Activated CD8-positive, alpha-beta T cell treated with anti-CD3 and anti-CD28 coated beads, Interleukin-2, amount 10 ng/mL, durations not matched to agents 7 days and 5 days (primary cell): ENCODE measurements at regions of chr9 and their contacts with region 1.

Region 1: GRCh38 chr9:89505911-89506310 is 8.0 kb upstream of the SEMA4D start:
- DNase-seq: no peak
- ATAC-seq: no peak
- H3K4me3 Mint-ChIP-seq: no peak overlapping the region
- H3K27ac Mint-ChIP-seq: no peak overlapping the region
- H3K4me1 Mint-ChIP-seq: peaks cover 93% of the 10 kb centered on the region
- H3K27me3 Mint-ChIP-seq: no peaks in the 10 kb centered on the region

Region 2: GRCh38 chr9:89529243-89530035 is 23.5 kb after region 1 on chr9:
- CTCF ChIA-PET with region 1: interaction called, 36 read pairs
- POLR2A ChIA-PET with region 1: interaction called, 15 read pairs
- DNase-seq: peak; percentile 56
- ATAC-seq: peak; percentile 71
- H3K4me3 Mint-ChIP-seq: peak overlapping the region; percentile 26
- H3K27ac Mint-ChIP-seq: peak overlapping the region; percentile 85
- H3K4me1 Mint-ChIP-seq: peaks cover 96% of the 10 kb centered on the region
- H3K27me3 Mint-ChIP-seq: no peaks in the 10 kb centered on the region

Region 3: DNA sequence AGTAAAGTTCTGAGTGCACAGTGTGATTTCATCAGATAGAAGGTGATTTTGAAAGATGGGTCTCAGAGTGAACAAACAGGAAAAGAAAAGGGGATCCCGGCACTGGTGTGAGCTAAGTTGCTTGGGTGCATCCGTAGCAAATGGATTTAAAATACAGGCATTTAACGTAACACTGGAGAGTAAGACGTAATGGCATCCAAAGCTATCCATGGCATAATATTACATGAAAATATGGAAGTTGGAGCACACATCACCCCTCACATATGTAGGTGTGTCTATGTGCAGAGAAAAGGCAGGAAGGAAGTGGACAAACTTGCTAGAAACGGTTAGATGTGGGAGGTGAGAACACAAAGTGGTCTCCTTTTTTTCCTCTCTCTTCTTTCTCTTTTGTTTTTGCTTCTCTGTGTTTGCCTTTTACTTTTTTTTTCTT is 30.2 kb after region 1 on chr9:
- CTCF ChIA-PET with region 1: interaction called, 36 read pairs
- POLR2A ChIA-PET with region 1: interaction called, 15 read pairs
- DNase-seq: peak; percentile 64
- ATAC-seq: peak; percentile 78
- H3K4me3 Mint-ChIP-seq: peak overlapping the region; percentile 64
- H3K27ac Mint-ChIP-seq: peak overlapping the region; percentile 89
- H3K4me1 Mint-ChIP-seq: peaks cover 90% of the 10 kb centered on the region
- H3K27me3 Mint-ChIP-seq: no peaks in the 10 kb centered on the region

Region 4: GRCh38 chr9:89993678-89994630 is 488.0 kb after region 1 on chr9:
- CTCF ChIA-PET with region 1: no interaction called
- POLR2A ChIA-PET with region 1: no interaction called
- DNase-seq: no peak
- ATAC-seq: no peak
- H3K4me3 Mint-ChIP-seq: no peak overlapping the region
- H3K27ac Mint-ChIP-seq: no peak overlapping the region
- H3K4me1 Mint-ChIP-seq: peaks cover 13% of the 10 kb centered on the region
- H3K27me3 Mint-ChIP-seq: peaks cover 2% of the 10 kb centered on the region